ENCODE measurements at regions of chr6 and their contacts with region 1.

Region 1: DNA sequence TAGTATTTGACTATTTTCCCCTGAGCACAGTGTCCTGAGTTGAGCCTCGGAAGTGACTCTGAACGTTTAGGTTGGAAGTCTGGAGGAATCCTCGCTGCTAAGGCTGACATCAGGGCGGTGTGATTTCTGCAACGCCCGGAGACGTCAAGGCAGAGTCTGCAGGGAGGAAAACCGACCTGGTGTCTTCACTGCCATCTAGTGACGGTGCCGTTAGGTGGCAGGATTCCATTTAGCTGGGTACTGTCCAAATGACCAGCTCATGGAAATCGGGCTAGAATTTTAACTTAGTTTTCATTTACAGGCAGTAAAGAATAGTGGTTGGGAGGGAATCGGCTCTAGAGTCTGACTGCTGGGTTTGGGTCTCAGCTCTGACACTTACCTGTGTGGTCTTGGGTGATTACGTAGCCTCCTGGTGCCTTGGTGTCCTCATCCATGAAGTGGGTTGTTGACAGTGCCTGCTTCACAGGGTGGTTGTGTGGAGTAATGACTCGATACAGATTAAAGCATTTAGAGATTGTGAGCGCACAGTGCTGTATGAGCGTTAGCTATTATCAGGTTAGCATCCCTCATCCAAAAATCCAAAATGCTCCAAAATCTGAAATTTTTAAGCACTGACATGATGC is 35.0 kb downstream of the FOXF2 start:
- DNase-seq: peak; percentile 54
- H3K4me3 Mint-ChIP-seq: no peak overlapping the region
- H3K27ac Mint-ChIP-seq: no peak overlapping the region
- H3K4me1 Mint-ChIP-seq: no peaks in the 10 kb centered on the region
- H3K27me3 Mint-ChIP-seq: peaks cover 31% of the 10 kb centered on the region
- CTCF ChIP-seq: peak; percentile 22

Region 2: GRCh38 chr6:1372690-1373089 is 51.7 kb before region 1 on chr6:
- CTCF ChIA-PET with region 1: no interaction called
- intact Hi-C with region 1: loop called (anchors 2 kb)
- DNase-seq: no peak
- H3K4me3 Mint-ChIP-seq: no peak overlapping the region
- H3K27ac Mint-ChIP-seq: no peak overlapping the region
- H3K4me1 Mint-ChIP-seq: no peaks in the 10 kb centered on the region
- H3K27me3 Mint-ChIP-seq: peaks cover 80% of the 10 kb centered on the region
- CTCF ChIP-seq: no peak